CD4-positive, alpha-beta memory T cell (primary cell): ENCODE measurements at regions of chr7 and their contacts with region 1.

Region 1: GRCh38 chr7:876167-876967 is at the start of gene GET4:
- DNase-seq: peak; percentile 96 to 100 (median 99)
- H3K4me3 ChIP-seq: peak within 1 kb of the TSS; percentile 11 to 68
- H3K4me3 Mint-ChIP-seq: peak within 1 kb of the TSS; percentile 87 to 96 (median 91)
- H3K27ac ChIP-seq: peak within 1 kb of the TSS; percentile 84
- H3K27ac Mint-ChIP-seq: peak within 1 kb of the TSS; percentile 83 to 96 (median 94)
- H3K4me1 ChIP-seq: peaks cover 48% of the 10 kb centered on the region
- H3K4me1 Mint-ChIP-seq: peaks cover 18 to 42% (median 31%) of the 10 kb centered on the region in 4 donors
- H3K27me3 ChIP-seq: no peaks in the 10 kb centered on the region
- H3K27me3 Mint-ChIP-seq: no peaks in the 10 kb centered on the region
- total RNA-seq, gene GET4: 47.4 to 51.6 TPM

Region 2: DNA sequence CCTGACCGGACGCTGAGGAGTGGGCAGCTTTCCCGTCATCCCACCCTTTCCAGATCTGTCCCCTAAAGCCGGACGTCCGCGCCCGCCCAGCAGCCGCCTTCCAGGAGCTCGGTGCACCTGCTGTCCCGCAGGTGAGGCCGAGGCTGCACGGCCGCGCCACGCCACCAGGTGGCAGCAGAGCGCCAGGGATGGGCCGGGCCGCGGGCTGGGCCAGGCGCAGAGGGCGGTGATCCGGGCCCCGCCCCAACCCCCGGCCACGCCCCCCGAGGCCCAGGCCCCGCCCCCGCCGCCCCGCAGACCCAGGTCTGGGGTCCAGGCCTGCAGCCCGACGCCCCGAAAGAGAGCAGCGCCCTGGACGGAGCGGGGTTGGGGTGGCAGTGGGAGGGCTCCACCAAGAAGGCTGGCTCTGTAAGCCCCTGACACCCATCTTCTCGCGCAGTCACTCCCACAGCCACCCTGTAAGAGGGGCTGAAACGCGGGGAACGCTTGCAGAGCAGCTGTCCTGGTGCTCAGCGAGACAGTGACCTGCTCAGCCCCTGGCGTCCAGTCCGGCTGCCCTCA is 554.2 kb before region 1 on chr7:
- CTCF ChIA-PET with region 1: interaction called, 22 read pairs
- POLR2A ChIA-PET with region 1: interaction called, 4 read pairs
- intact Hi-C with region 1: loop called (anchors 1 kb)
- DNase-seq: peak; percentile 72 to 89 (median 81)
- H3K4me3 ChIP-seq: no peak overlapping the region
- H3K4me3 Mint-ChIP-seq: peak overlapping the region in 1 of 8 donors; percentile 23
- H3K27ac ChIP-seq: no peak overlapping the region
- H3K27ac Mint-ChIP-seq: no peak overlapping the region
- H3K4me1 ChIP-seq: peaks cover 7% of the 10 kb centered on the region
- H3K4me1 Mint-ChIP-seq: peaks cover 0 to 2% (median 0%) of the 10 kb centered on the region in 4 donors
- H3K27me3 ChIP-seq: peaks cover 4% of the 10 kb centered on the region
- H3K27me3 Mint-ChIP-seq: peaks cover 24 to 25% of the 10 kb centered on the region in 2 donors

Region 3: DNA sequence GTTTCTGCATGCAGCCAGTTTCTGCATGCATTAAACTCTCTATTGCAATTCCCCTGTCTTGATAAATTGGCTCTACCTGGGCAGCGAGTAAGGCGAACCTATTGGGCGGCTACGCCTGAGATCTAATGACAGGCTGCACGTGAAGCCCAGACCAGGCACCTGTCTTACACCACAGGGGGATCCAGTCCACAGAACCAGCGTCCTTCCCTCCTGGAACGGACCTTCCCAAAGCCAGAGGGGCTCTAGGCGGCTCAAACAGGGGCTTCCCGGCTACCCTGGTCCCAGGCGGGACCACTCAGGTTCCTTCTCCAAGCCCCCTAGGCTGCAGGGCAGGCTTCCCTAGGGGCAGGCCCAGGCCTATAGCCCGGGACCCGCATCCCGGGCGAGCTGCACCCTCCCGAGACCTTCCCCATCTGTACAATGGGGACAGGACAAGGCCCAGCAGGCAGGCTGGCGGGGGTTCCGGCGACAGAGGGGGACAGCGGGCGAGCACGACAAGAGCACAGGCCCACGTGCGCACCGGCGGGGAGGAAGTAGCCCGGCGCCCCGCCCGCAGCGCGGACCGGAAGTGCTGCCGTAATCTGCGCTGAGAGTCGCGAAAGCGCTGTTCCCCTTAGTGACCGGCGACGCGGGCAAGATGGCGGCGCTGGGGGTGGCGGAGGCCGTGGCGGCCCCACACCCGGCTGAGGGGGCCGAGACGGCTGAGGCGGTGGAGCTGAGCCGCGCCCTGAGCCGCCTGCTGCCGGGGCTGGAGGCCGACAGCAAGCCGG is 150.1 kb before region 1 on chr7 and contains the start of gene DNAAF5:
- CTCF ChIA-PET with region 1: no interaction called
- POLR2A ChIA-PET with region 1: no interaction called
- intact Hi-C with region 1: loop called (anchors 5 kb)
- DNase-seq: peak; percentile 82 to 85 (median 85)
- H3K4me3 ChIP-seq: peak within 1 kb of the TSS; percentile 48 to 52
- H3K4me3 Mint-ChIP-seq: peak within 1 kb of the TSS; percentile 72 to 89 (median 84)
- H3K27ac ChIP-seq: peak within 1 kb of the TSS; percentile 62
- H3K27ac Mint-ChIP-seq: peak within 1 kb of the TSS; percentile 53 to 88 (median 76)
- H3K4me1 ChIP-seq: peaks cover 17% of the 10 kb centered on the region
- H3K4me1 Mint-ChIP-seq: peaks cover 18 to 29% (median 20%) of the 10 kb centered on the region in 4 donors
- H3K27me3 ChIP-seq: no peaks in the 10 kb centered on the region
- H3K27me3 Mint-ChIP-seq: no peaks in the 10 kb centered on the region
- total RNA-seq, gene DNAAF5: 15.9 to 19.4 TPM

Region 4: DNA sequence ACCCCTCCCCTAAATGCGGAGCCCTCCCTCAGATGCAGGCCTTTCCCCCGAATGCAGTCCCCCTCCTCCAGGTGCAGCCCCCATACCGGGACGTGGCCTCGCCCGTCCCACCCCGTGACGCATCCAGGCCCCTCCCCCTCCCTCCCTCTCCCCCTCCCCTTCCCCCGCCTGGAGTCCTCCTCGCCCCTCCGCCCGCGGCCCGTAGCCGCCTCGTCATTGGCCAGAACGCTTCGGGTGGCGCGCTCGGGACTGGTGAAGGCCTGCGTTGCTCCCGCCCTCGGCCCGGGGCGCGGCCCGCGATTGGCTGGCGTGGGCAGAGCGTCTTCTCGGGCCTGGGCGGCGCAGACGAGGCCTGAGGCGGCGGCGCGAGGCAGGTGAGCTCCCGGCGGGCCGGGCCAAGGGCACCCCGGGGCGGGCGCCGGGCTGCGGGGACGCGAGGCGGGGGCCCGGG is 60.0 kb before region 1 on chr7:
- CTCF ChIA-PET with region 1: interaction called, 15 read pairs
- POLR2A ChIA-PET with region 1: interaction called, 7 read pairs
- intact Hi-C with region 1: loop called (anchors 1 kb)
- DNase-seq: peak; percentile 96 to 98 (median 97)
- H3K4me3 ChIP-seq: peak overlapping the region in 1 of 2 donors; percentile 56
- H3K4me3 Mint-ChIP-seq: peak overlapping the region; percentile 63 to 89 (median 77)
- H3K27ac ChIP-seq: peak overlapping the region; percentile 16
- H3K27ac Mint-ChIP-seq: peak overlapping the region in 1 of 7 donors; percentile 41
- H3K4me1 ChIP-seq: peaks cover 57% of the 10 kb centered on the region
- H3K4me1 Mint-ChIP-seq: peaks cover 46 to 74% (median 60%) of the 10 kb centered on the region in 4 donors
- H3K27me3 ChIP-seq: no peaks in the 10 kb centered on the region
- H3K27me3 Mint-ChIP-seq: no peaks in the 10 kb centered on the region

Region 5: GRCh38 chr7:923108-924041 is 47.0 kb after region 1 on chr7:
- CTCF ChIA-PET with region 1: no interaction called
- POLR2A ChIA-PET with region 1: interaction called, 13 read pairs
- intact Hi-C with region 1: loop called (anchors 1 kb)
- DNase-seq: peak; percentile 90 to 97 (median 90)
- H3K4me3 ChIP-seq: peak overlapping the region; percentile 76 to 85
- H3K4me3 Mint-ChIP-seq: peak overlapping the region; percentile 84 to 90 (median 88)
- H3K27ac ChIP-seq: peak overlapping the region; percentile 89
- H3K27ac Mint-ChIP-seq: peak overlapping the region; percentile 91 to 97 (median 95)
- H3K4me1 ChIP-seq: peaks cover 34% of the 10 kb centered on the region
- H3K4me1 Mint-ChIP-seq: peaks cover 7 to 30% (median 11%) of the 10 kb centered on the region in 4 donors
- H3K27me3 ChIP-seq: no peaks in the 10 kb centered on the region
- H3K27me3 Mint-ChIP-seq: no peaks in the 10 kb centered on the region

Region 6: DNA sequence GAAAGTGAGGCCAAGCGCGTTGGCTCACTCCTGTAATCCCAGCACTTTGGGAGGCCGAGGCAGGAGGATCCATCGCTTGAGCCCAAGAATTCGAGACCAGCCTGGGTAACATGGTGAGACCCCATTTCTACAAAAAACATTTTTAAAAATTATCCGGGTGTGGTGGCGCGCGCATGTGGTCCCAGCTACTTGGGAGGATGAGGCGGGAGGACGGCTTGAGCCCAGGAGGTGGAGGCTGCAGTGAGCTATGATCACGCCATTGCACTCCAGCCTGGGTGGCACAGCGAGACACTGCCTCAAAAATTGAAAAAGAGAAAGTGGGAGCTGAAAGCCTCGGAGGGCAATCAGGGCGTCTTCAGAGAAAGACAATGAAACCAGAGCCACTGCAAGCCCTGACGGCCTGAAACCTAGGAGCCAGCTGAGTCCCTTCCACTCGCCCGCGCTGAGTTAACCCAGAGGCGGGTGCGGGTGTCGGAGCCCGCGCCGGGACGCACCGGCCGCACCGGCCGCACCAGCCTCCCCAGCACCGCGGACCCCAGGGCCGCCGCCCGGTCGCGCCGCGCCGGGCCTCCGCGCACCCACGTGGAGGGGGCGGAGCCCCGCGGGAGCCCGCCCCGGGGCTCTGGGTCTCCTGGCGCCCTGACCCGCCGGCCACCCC is 261.3 kb after region 1 on chr7:
- CTCF ChIA-PET with region 1: no interaction called
- POLR2A ChIA-PET with region 1: no interaction called
- intact Hi-C with region 1: loop called (anchors 1 kb)
- DNase-seq: no peak
- H3K4me3 ChIP-seq: peak overlapping the region; percentile 63 to 94
- H3K4me3 Mint-ChIP-seq: peak overlapping the region; percentile 86 to 95 (median 92)
- H3K27ac ChIP-seq: peak overlapping the region; percentile 76
- H3K27ac Mint-ChIP-seq: peak overlapping the region; percentile 90 to 97 (median 93)
- H3K4me1 ChIP-seq: peaks cover 15% of the 10 kb centered on the region
- H3K4me1 Mint-ChIP-seq: peaks cover 10 to 26% (median 16%) of the 10 kb centered on the region in 4 donors
- H3K27me3 ChIP-seq: no peaks in the 10 kb centered on the region
- H3K27me3 Mint-ChIP-seq: no peaks in the 10 kb centered on the region

Region 7: DNA sequence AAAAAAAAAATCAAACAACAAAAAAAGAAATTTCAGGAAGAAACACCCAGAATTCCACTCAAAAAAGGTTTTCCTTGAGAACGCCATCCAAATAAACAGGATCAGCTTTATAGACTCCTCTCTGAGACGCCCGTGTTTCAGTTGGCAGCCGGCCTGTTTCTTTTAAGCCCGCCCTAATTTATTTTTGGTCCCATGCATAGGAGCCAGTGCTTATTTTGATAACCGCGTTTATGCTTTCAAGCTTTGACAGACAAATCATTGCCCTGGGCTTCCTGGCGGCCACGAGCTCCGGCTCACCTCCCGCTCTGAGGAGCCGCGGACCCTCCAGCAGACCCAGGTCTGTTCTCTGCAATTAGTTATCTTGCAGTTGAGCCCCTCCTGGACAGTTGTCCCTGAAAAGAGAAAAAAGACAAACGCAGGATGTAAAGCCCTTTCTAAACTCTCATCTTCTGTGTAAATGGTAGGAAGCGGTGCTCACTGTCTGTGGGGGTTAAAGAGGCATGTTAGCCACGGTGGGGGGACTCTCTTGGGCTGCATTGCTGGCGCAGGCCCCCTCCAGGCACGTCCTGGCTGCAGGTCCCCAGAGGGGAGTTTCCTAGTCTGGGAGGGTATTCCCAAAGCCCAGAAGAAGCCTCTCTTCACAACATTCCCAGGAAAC is 334.1 kb after region 1 on chr7:
- CTCF ChIA-PET with region 1: no interaction called
- POLR2A ChIA-PET with region 1: no interaction called
- intact Hi-C with region 1: no loop called
- DNase-seq: no peak
- H3K4me3 ChIP-seq: no peak overlapping the region
- H3K4me3 Mint-ChIP-seq: peak overlapping the region in 1 of 8 donors; percentile 8
- H3K27ac ChIP-seq: no peak overlapping the region
- H3K27ac Mint-ChIP-seq: no peak overlapping the region
- H3K4me1 ChIP-seq: no peaks in the 10 kb centered on the region
- H3K4me1 Mint-ChIP-seq: peaks cover 0 to 5% (median 0%) of the 10 kb centered on the region in 4 donors
- H3K27me3 ChIP-seq: no peaks in the 10 kb centered on the region
- H3K27me3 Mint-ChIP-seq: peaks cover 31% of the 10 kb centered on the region in 2 donors